ENCODE measurements at regions of chr3 and their contacts with region 1.

Region 1: GRCh38 chr3:12484198-12484974 is at the start of gene TSEN2:
- DNase-seq: peak; percentile 95 to 100 (median 98)
- ATAC-seq: peak; percentile 96
- H3K4me3 ChIP-seq: peak within 1 kb of the TSS; percentile 76
- H3K4me3 Mint-ChIP-seq: peak within 1 kb of the TSS; percentile 87 to 99 (median 97)
- H3K27ac ChIP-seq: peak within 1 kb of the TSS; percentile 92
- H3K27ac Mint-ChIP-seq: peak within 1 kb of the TSS; percentile 96 to 99 (median 98)
- H3K4me1 ChIP-seq: peaks cover 17% of the 10 kb centered on the region in 2 donors
- H3K4me1 Mint-ChIP-seq: peaks cover 21 to 65% (median 44%) of the 10 kb centered on the region in 7 donors
- H3K27me3 ChIP-seq: no peaks in the 10 kb centered on the region
- H3K27me3 Mint-ChIP-seq: peaks cover 0 to 2% (median 0%) of the 10 kb centered on the region in 5 donors
- total RNA-seq, gene TSEN2: 12.1 to 27.5 (median 13.6) TPM

Region 2: DNA sequence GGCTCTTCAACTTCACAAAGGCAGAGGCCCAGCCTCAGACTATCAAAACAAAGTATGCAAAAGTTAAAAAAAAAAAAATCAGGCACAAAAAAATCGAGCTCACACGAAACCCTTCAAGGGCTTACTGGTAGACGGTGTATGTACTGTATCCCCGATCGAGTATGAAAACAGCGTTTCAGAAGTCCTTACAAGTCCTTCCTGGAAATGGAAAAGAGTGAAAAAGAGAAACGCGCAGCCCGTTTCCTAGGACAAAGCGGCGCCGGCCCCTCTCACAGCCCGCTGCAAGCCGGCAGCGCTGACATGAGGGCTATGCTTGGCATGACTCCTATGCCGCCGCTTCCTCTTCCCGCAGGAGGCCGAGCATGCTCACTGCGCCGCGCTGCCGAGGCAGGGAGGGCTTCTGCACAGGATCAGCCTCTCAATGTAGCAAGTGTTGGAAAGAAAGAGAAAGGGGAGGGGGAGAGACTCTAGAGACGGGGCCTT is 840.7 kb before region 1 on chr3 and contains the start of gene VGLL4:
- CTCF ChIA-PET with region 1: no interaction called
- POLR2A ChIA-PET with region 1: no interaction called
- intact Hi-C with region 1: loop called (anchors 5 kb)
- DNase-seq: peak; percentile 42 to 71 (median 58)
- ATAC-seq: peak; percentile 72
- H3K4me3 ChIP-seq: peak within 1 kb of the TSS; percentile 98
- H3K4me3 Mint-ChIP-seq: peak within 1 kb of the TSS; percentile 90 to 100 (median 98)
- H3K27ac ChIP-seq: peak within 1 kb of the TSS; percentile 91
- H3K27ac Mint-ChIP-seq: peak within 1 kb of the TSS; percentile 94 to 100 (median 99)
- H3K4me1 ChIP-seq: peaks cover 12 to 23% of the 10 kb centered on the region in 2 donors
- H3K4me1 Mint-ChIP-seq: peaks cover 22 to 43% (median 37%) of the 10 kb centered on the region in 7 donors
- H3K27me3 ChIP-seq: no peaks in the 10 kb centered on the region
- H3K27me3 Mint-ChIP-seq: peaks cover 0 to 17% (median 0%) of the 10 kb centered on the region in 5 donors
- total RNA-seq, gene VGLL4: 22.9 to 44.8 (median 36.2) TPM

Region 3: GRCh38 chr3:11770477-11771391 is 713.7 kb before region 1 on chr3:
- CTCF ChIA-PET with region 1: no interaction called
- POLR2A ChIA-PET with region 1: no interaction called
- intact Hi-C with region 1: loop called in 1 of 2 experiments (anchors 1 kb)
- DNase-seq: peak; percentile 31 to 91 (median 86)
- ATAC-seq: peak; percentile 100
- H3K4me3 ChIP-seq: peak overlapping the region; percentile 12
- H3K4me3 Mint-ChIP-seq: peak overlapping the region; percentile 22 to 79 (median 62)
- H3K27ac ChIP-seq: peak overlapping the region; percentile 56
- H3K27ac Mint-ChIP-seq: peak overlapping the region; percentile 58 to 90 (median 70)
- H3K4me1 ChIP-seq: peaks cover 15% of the 10 kb centered on the region in 2 donors
- H3K4me1 Mint-ChIP-seq: peaks cover 11 to 30% (median 24%) of the 10 kb centered on the region in 7 donors
- H3K27me3 ChIP-seq: no peaks in the 10 kb centered on the region
- H3K27me3 Mint-ChIP-seq: no peaks in the 10 kb centered on the region

Region 4: DNA sequence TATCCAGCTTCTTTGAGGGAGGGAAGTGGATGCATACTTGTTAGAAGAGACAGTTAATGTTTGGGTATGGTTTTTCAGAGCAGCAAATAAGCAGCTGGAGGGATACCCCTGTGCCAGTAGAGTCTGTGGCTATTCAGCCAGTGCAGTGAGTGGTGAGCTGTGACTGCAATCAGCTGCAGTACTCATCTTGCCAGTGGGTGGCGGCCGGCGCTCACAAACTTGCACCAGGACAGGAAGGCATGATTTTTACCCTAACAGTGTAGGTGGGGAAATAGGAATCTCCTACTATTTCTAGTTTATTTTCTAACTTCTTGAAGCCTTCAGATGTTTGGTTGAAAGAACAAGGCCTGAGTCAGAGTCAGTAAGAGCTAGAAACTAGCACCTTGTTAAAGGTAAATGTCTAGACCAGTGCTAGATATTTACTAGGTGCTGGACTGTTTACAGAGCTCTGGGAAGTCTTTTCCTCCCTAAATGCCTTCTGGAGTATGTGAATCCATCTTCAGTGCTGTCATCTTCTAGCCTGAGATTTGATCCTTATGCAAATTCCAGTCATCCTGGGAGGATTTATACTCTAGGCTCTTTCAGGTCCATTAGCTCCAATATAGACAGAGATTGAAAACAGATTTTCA is 349.2 kb before region 1 on chr3:
- CTCF ChIA-PET with region 1: interaction called, 17 read pairs
- POLR2A ChIA-PET with region 1: interaction called, 3 read pairs
- intact Hi-C with region 1: loop called (anchors 1 kb)
- DNase-seq: peak; percentile 9 to 68 (median 47)
- ATAC-seq: peak; percentile 83
- H3K4me3 ChIP-seq: no peak overlapping the region
- H3K4me3 Mint-ChIP-seq: no peak overlapping the region
- H3K27ac ChIP-seq: no peak overlapping the region
- H3K27ac Mint-ChIP-seq: no peak overlapping the region
- H3K4me1 ChIP-seq: no peaks in the 10 kb centered on the region
- H3K4me1 Mint-ChIP-seq: no peaks in the 10 kb centered on the region
- H3K27me3 ChIP-seq: no peaks in the 10 kb centered on the region
- H3K27me3 Mint-ChIP-seq: peaks cover 16 to 29% (median 22%) of the 10 kb centered on the region in 5 donors

Region 5: GRCh38 chr3:12521010-12521409 is 36.6 kb after region 1 on chr3:
- CTCF ChIA-PET with region 1: no interaction called
- POLR2A ChIA-PET with region 1: no interaction called
- intact Hi-C with region 1: no loop called
- DNase-seq: no peak
- ATAC-seq: no peak
- H3K4me3 ChIP-seq: no peak overlapping the region
- H3K4me3 Mint-ChIP-seq: no peak overlapping the region
- H3K27ac ChIP-seq: no peak overlapping the region
- H3K27ac Mint-ChIP-seq: peak overlapping the region in 1 of 9 donors; percentile 55
- H3K4me1 ChIP-seq: no peaks in the 10 kb centered on the region
- H3K4me1 Mint-ChIP-seq: no peaks in the 10 kb centered on the region
- H3K27me3 ChIP-seq: no peaks in the 10 kb centered on the region
- H3K27me3 Mint-ChIP-seq: no peaks in the 10 kb centered on the region

Region 6: GRCh38 chr3:12556671-12557472 is 72.5 kb after region 1 on chr3 and contains the start of gene MKRN2:
- CTCF ChIA-PET with region 1: no interaction called
- POLR2A ChIA-PET with region 1: interaction called, 22 read pairs
- intact Hi-C with region 1: loop called (anchors 1 kb)
- DNase-seq: peak; percentile 74 to 89 (median 83)
- ATAC-seq: peak; percentile 98
- H3K4me3 ChIP-seq: peak within 1 kb of the TSS; percentile 95
- H3K4me3 Mint-ChIP-seq: peak within 1 kb of the TSS; percentile 90 to 100 (median 96)
- H3K27ac ChIP-seq: peak within 1 kb of the TSS; percentile 94
- H3K27ac Mint-ChIP-seq: peak within 1 kb of the TSS; percentile 87 to 95 (median 93)
- H3K4me1 ChIP-seq: peaks cover 31 to 38% of the 10 kb centered on the region in 2 donors
- H3K4me1 Mint-ChIP-seq: peaks cover 40 to 71% (median 68%) of the 10 kb centered on the region in 7 donors
- H3K27me3 ChIP-seq: peaks cover 6% of the 10 kb centered on the region in 2 donors
- H3K27me3 Mint-ChIP-seq: peaks cover 22 to 37% (median 28%) of the 10 kb centered on the region in 5 donors
- total RNA-seq, gene MKRN2: 21.9 to 34.5 (median 25.4) TPM

Region 7: GRCh38 chr3:12891985-12892839 is 407.8 kb after region 1 on chr3:
- CTCF ChIA-PET with region 1: no interaction called
- POLR2A ChIA-PET with region 1: no interaction called
- intact Hi-C with region 1: loop called in 1 of 2 experiments (anchors 1 kb)
- DNase-seq: peak in 8 of 9 donors; percentile 29 to 57 (median 50)
- ATAC-seq: peak; percentile 65
- H3K4me3 ChIP-seq: peak overlapping the region; percentile 19
- H3K4me3 Mint-ChIP-seq: peak overlapping the region in 9 of 10 donors; percentile 12 to 75 (median 58)
- H3K27ac ChIP-seq: no peak overlapping the region
- H3K27ac Mint-ChIP-seq: peak overlapping the region in 3 of 9 donors; percentile 9 to 47 (median 12)
- H3K4me1 ChIP-seq: peaks cover 0 to 7% of the 10 kb centered on the region in 2 donors
- H3K4me1 Mint-ChIP-seq: peaks cover 6 to 14% (median 12%) of the 10 kb centered on the region in 7 donors
- H3K27me3 ChIP-seq: no peaks in the 10 kb centered on the region
- H3K27me3 Mint-ChIP-seq: peaks cover 0 to 38% (median 14%) of the 10 kb centered on the region in 5 donors

Measured in naive thymus-derived CD4-positive, alpha-beta T cell (primary cell).